Pancreas (tissue), 10 donors: ENCODE measurements at regions of chr4 and their contacts with region 1.

Region 1: DNA sequence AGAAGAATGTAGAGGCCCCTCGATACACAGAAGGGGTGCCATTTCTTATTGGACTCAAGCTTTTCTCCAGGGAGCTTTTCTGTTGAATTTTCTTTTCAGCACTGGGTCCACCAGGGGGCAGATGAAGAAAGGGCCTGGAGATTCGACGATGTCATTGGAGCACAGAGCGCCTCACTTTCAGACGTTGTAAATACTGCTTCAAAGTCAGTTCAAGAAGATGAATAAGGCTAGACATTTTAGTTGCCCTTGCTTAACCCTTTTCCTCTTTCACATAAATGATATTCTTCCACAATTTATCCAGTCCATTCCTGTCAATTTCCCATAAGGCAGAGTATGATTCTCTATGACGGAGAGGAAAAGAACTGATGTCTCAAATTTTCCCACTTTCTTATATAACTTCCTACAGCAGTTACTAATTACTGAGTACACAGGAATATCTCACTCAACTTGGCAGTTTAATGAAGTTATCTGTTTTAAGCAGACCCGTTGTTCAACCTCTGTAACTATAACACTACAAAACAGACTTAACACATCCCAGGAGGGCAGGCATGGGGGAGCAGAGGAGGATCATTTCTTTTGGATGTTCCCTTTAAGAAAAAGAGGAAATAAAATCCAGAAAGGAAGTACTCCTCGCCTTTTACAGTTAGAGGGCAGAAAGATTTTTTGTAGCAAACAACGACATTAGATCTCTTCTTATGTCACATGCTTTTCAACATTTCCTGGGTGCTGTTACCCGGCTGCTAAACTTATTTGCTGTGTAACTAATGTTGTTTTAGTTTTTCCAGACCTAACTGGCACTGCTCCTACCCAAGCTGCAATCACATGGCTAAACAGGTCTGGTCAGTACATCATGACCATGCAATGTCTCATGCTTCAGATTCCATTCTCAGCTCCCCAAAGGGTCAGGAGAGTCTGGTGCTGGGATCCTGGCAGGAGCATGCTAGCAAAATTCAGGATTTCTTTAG is 12.2 kb upstream of the CENPU start:
- DNase-seq: peak in 5 of 6 donors; percentile 65 to 78 (median 74)
- ATAC-seq: peak; percentile 83 to 86 (median 85)
- H3K4me3 ChIP-seq: peak overlapping the region in 1 of 4 donors; percentile 16
- H3K27ac ChIP-seq: peak overlapping the region; percentile 78 to 94 (median 82)
- H3K4me1 ChIP-seq: peaks cover 9 to 25% (median 21%) of the 10 kb centered on the region in 3 donors
- H3K27me3 ChIP-seq: no peaks in the 10 kb centered on the region
- CTCF ChIP-seq: peak; percentile 37 to 69 (median 60)

Region 2: GRCh38 chr4:184649026-184649970 is 96.8 kb before region 1 on chr4 and contains the starts of genes CASP3 and PRIMPOL:
- intact Hi-C with region 1: no loop called
- DNase-seq: peak; percentile 96 to 99 (median 98)
- ATAC-seq: peak; percentile 90 to 95 (median 93)
- H3K4me3 ChIP-seq: peak within 1 kb of the TSS; percentile 54 to 84 (median 79)
- H3K27ac ChIP-seq: peak within 1 kb of the TSS; percentile 73 to 96 (median 89)
- H3K4me1 ChIP-seq: peaks cover 10 to 35% (median 25%) of the 10 kb centered on the region in 3 donors
- H3K27me3 ChIP-seq: no peaks in the 10 kb centered on the region
- CTCF ChIP-seq: no peak
- total RNA-seq, gene CASP3: 3.6 to 13.6 (median 6.3) TPM
- total RNA-seq, gene PRIMPOL: 3.3 to 10.2 (median 6.0) TPM

Region 3: DNA sequence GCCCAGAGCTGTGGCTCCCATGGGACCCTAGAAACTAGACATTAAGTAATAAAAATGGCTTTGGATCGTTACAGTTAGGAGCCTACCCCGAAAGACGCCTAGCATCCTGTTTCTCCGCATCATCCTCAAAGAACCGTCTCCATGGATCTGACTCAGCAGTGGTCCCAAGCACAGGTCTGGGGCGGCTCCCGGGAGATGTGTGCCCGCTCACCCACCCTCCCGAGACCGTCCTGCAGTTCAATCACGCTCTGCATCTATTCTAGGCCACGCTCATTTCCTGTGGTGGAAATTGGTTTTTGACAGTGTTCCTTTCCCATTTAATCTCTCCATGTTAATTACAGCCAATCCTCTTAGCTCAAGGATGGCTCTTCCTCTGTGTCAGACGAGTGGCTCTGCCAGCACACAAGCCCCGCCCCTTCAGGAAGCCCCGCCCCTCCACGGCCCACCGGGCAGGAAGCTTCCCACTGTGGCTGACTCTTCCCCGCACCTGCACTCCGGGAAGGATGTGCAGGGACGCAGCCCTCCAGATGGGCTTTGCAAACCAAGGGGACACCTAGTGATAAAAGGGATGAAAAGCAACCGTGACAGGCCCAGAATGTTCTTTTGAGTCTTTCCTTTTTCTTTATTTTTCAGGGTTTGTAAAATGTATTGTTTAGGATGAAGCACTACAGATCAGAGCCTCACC is 237.7 kb after region 1 on chr4:
- intact Hi-C with region 1: loop called in 2 of 3 experiments (anchors 5 to 10 kb)
- DNase-seq: peak in 5 of 6 donors; percentile 29 to 75 (median 52)
- ATAC-seq: peak; percentile 43 to 91 (median 89)
- H3K4me3 ChIP-seq: no peak overlapping the region
- H3K27ac ChIP-seq: no peak overlapping the region
- H3K4me1 ChIP-seq: no peaks in the 10 kb centered on the region
- H3K27me3 ChIP-seq: no peaks in the 10 kb centered on the region
- CTCF ChIP-seq: no peak